Breast epithelium (tissue), 4 donors: ENCODE measurements at regions of chr4 and their contacts with region 1.

Region 1: DNA sequence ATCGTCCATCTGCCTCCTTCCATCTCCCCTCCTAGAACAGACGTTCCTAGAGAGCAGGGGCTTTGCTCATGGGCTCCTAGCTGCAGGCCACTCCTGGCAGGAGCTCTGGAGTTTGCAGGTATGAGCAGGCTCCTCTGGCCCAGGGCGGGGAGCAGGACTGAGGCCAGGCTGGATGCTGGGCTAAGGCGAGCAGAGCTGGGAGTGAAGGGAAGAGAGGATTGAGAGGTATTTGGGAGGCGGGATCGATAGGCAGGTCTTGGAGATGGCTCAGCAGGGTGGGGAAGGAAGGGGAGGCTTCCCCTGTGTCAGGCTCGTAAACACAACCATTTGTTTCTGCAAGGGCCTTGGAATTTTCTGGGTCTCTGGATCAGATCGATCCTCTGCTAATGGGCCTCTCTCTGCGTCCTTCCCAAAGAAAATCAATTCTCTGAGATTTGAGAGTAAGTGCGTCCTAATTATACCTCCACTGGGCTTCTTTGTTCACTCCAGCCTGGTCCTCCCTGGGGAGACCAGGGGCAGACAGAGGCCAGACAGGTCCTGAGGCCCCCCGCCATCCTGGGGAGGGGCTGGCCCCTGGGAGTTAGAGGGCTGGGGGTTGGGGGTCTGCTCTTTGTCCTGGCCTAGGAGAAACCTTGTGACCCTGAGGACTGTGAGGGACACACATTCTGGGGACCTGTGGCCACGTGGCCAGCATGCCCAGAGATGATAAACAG is 94.8 kb upstream of the PSAPL1 start:
- DNase-seq: no peak
- H3K4me3 ChIP-seq: no peak overlapping the region
- H3K27ac ChIP-seq: no peak overlapping the region
- H3K4me1 ChIP-seq: no peaks in the 10 kb centered on the region
- H3K27me3 ChIP-seq: peaks cover 0 to 12% of the 10 kb centered on the region in 2 donors
- CTCF ChIP-seq: no peak
- POLR2A ChIP-seq: no peak

Region 2: DNA sequence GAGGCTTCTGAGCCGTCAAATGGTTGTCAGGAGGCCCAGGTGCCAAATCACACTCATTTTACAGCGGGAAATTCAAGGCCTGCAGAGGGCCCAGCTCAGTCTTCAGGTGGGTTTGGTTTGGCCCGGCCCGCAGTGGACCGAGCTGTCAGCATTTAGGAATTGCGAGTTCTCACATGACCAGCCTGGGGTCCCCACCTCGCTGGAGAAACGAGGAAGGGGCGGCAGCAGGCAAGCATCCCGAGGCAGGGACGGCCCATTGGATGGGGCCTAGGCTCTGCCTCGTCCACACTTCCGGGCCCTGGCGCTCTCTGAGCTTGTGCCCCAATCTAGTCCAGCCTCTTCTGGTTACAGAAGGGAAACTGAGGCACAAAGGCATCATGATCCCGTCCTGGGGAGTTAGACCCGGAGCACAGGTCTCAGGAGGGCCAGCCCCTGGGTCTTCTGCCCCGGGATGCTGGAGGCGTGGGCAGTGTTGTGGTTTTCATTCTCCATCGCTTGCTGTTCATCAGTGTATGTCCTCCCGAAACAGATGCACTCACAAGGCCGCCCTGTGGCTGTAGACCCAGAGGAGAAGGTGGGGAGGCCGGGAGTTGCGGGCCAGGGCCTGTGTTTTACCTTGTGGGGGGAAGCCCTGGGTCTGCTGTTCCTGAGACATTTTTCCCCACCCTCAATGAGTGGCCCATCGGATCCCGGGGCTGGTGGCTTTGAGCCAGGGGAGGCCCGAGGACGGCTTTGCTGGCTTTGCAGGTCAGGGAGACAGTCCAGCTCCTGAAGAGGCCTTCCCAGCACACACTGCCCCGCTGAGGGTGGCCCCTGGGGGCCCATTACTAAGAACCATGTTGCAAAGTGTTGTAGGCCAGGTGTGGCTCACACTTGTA is 103.7 kb before region 1 on chr4:
- intact Hi-C with region 1: loop called (anchors 2 kb)
- DNase-seq: peak; percentile 11 to 47
- H3K4me3 ChIP-seq: no peak overlapping the region
- H3K27ac ChIP-seq: no peak overlapping the region
- H3K4me1 ChIP-seq: no peaks in the 10 kb centered on the region
- H3K27me3 ChIP-seq: no peaks in the 10 kb centered on the region
- CTCF ChIP-seq: no peak
- POLR2A ChIP-seq: no peak